ENCODE measurements at regions of chr4 and their contacts with region 1.

Region 1: GRCh38 chr4:140116442-140117104 is 37.4 kb downstream of the MAML3 start:
- DNase-seq: peak; percentile 80
- ATAC-seq: peak; percentile 99
- H3K4me3 Mint-ChIP-seq: no peak overlapping the region
- H3K27ac Mint-ChIP-seq: peak overlapping the region; percentile 86
- H3K4me1 Mint-ChIP-seq: peaks cover 27% of the 10 kb centered on the region
- H3K27me3 Mint-ChIP-seq: peaks cover 17% of the 10 kb centered on the region

Region 2: GRCh38 chr4:140103676-140104075 is 12.9 kb before region 1 on chr4:
- CTCF ChIA-PET with region 1: interaction called, 21 read pairs
- DNase-seq: peak; percentile 91
- ATAC-seq: peak; percentile 91
- H3K4me3 Mint-ChIP-seq: peak overlapping the region; percentile 48
- H3K27ac Mint-ChIP-seq: peak overlapping the region; percentile 96
- H3K4me1 Mint-ChIP-seq: peaks cover 80% of the 10 kb centered on the region
- H3K27me3 Mint-ChIP-seq: peaks cover 10% of the 10 kb centered on the region